Sciatic nerve (tissue), 2 donors: ENCODE measurements at regions of chr1 and their contacts with region 1.

Region 1: GRCh38 chr1:187146388-187146787 is 317.6 kb downstream of the PLA2G4A start:
- DNase-seq: no peak
- ATAC-seq: no peak

Region 2: DNA sequence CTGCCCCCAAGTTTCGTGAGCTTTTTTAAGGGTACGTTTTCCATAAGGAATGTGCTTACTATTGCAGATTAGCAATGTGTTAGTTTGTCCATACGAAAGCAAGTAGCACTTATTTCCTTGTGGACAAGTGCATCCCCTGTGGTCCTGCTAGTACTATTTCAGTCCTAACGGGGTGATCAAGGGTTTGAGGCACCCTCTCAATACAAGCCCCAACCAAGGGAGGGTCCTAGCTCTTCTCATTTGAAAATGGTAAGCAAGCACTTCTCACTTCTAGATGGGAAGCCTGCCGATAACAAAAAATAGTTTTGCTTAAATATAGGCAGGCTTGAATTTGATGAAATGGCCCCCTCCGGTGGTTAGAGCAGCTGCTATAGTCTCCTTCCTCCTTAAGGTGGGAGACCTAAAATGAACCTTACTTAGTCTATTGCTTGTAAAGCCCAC is 1476.2 kb before region 1 on chr1:
- intact Hi-C with region 1: loop called (anchors 5 kb)
- DNase-seq: no peak
- ATAC-seq: peak; percentile 74